ENCODE measurements at regions of chr10 and their contacts with region 1.

Region 1: DNA sequence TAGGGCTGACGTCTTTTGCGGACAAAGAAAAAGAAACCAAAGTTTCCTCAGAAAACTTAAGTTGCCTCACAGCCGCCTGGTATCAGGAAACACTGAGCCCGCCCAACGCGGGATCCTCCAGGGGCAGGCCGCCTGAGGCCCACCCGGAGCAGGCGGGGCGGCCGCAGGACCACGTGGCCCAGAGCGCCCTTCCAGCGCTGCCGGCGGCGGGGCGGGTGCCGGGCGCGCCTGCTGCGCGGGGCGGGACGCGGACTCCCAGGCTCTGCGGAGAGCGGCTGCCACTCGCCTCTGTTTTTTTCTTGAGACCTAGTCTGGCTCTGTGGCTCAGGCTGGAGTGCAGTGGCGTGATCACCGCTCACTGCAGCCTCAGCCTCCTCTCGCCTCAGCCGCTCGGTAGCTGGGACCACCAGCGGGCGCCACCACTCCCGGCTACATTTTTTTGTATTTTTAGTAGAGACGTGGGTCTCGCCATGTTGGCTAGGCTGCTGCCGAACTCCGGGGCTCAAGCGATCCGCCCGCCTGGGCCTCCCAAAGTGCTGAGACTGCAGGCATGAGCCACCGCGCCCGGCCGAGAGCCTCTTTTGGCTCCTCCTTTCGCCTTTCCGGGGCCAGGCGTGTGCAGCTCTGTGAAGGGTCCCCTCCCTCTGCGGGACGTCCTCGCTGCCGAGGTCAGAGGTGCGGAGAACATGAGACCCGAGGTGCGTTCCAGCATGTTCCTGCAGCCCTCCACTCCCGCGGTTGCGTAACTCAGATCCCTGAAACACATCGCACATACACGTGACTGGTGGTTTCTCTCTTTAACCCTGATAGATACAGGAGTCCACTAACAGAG is 11.6 kb upstream of the HNRNPF start:
- DNase-seq: peak; percentile 73 to 88 (median 84)
- ATAC-seq: peak; percentile 87 to 91
- H3K4me3 Mint-ChIP-seq: peak overlapping the region; percentile 88 to 94 (median 92)
- H3K27ac Mint-ChIP-seq: peak overlapping the region; percentile 96 to 98 (median 97)
- H3K4me1 Mint-ChIP-seq: peaks cover 14 to 45% (median 35%) of the 10 kb centered on the region in 4 donors
- H3K27me3 Mint-ChIP-seq: no peaks in the 10 kb centered on the region

Region 2: DNA sequence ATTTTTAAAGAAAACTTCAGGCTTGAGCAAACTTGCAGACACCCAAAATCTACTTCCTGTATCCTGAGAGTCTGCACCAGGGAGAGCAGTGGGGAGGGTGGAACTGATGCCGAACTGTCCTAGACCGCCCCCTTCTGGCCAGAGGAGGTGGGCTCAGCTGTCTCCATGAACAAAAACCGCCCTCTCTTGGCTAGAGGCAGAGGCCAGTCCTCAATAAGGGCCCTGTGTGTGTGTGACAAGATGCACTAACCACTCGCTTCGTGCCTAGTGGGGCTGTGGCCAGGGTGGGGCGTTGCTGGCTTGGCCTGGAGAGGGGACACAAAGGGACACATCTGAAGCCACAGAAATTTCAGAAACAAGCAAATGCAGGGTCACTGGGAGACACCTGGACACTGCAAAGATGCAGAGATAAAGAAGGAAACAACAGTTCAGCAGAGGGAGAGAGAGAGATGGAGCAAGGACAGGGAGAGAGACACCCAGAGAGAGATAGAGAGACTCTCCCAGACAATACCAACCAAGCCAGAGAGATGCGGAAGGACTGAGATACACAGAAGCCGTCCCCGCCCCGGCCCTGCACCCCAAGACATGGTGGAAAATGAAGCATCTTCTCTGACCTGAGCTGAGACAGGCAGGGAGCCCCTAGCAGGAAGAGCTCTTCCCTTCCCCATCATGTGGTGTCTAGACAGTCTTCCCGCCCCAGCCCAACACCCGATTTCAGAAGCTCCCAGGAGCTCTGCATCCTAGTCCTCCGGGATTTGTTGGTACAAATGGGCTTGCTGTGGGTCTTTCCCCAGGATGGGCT is 71.9 kb before region 1 on chr10:
- POLR2A ChIA-PET with region 1: no interaction called
- DNase-seq: peak; percentile 70 to 92 (median 82)
- ATAC-seq: peak; percentile 100
- H3K4me3 Mint-ChIP-seq: peak overlapping the region in 4 of 10 donors; percentile 4 to 34 (median 20)
- H3K27ac Mint-ChIP-seq: peak overlapping the region in 7 of 10 donors; percentile 33 to 84 (median 58)
- H3K4me1 Mint-ChIP-seq: peaks cover 12 to 19% (median 16%) of the 10 kb centered on the region in 4 donors
- H3K27me3 Mint-ChIP-seq: peaks cover 0 to 26% (median 14%) of the 10 kb centered on the region in 5 donors

Region 3: DNA sequence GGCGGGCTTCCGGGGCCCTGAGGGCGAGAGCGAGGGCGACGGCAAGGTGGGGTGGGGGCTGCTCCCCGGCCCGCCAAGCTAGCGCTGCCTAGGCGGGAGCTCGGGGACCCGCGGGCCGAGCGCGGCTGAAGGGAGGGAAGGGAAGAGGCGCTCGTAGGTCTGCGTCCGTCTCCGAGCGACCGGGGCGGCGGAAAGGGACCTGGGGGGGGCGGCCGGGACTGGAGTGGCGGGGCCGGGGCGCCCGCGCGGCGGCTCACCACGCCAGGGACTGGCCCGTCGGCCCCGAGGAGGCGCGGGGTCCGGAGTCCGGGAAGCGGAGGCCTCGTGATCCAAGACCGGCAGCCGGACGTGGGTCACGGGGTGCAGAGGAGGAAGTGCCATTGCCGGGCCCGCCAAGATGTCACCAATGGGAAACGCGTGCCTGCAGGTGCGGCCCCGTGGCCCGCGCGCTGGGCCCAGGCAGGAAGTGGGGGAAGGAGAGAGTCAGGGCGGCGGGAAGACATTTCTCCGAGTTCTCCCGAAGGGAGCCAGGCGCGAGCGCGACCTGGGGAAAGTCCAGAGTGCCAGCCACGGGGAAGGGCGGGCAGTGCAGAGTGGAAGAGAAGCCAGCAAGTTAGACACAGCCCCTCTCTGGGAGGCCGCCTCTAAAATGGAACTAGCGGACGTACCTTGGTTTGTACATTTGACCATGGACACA is 23.5 kb before region 1 on chr10:
- POLR2A ChIA-PET with region 1: interaction called, 10 read pairs
- DNase-seq: peak; percentile 53 to 80 (median 70)
- ATAC-seq: peak; percentile 73 to 75
- H3K4me3 Mint-ChIP-seq: peak overlapping the region; percentile 85 to 97 (median 94)
- H3K27ac Mint-ChIP-seq: peak overlapping the region; percentile 93 to 99 (median 97)
- H3K4me1 Mint-ChIP-seq: peaks cover 32 to 87% (median 83%) of the 10 kb centered on the region in 4 donors
- H3K27me3 Mint-ChIP-seq: no peaks in the 10 kb centered on the region

Region 4: DNA sequence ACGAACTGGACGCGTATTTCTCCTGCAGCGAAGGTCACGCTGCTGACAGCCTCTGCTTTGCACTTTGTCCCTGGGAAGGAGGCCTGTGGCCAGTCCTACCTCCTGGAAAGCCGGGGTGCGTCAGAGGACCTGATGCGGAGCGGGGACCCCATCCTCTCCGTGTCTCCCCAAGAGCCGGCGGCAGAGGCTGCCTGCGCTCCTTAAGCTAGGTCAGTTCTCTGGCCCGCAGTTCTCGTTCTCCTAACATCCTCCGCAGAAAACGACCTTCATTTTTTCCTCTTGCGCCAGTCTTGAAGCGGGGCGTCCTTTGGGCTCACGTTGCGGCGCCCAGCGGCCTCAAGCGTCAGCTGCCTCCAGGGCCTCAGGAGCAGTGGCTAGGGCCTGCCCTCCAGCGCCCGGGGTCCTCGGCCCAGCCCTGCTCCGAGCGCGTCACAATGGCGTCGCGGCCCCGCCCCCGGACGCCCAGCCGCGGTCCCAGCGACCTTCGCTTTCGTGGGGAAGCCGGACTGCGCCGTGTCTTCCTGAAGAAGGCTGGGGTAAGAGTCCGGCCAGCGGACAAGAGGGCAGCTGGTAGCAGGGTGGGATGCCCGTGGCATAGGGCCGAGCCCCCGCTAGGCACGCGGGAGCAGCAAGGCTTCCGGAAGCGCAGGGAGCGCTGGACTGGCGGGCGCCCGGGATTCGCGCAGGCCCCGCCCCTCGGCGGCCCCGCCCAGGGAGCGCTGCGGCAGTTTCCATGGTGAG is 16.0 kb after region 1 on chr10 and contains the start of gene ZNF487:
- POLR2A ChIA-PET with region 1: interaction called, 39 read pairs
- DNase-seq: peak; percentile 81 to 97 (median 92)
- ATAC-seq: peak; percentile 88 to 90
- H3K4me3 Mint-ChIP-seq: peak within 1 kb of the TSS; percentile 89 to 100 (median 96)
- H3K27ac Mint-ChIP-seq: peak within 1 kb of the TSS; percentile 94 to 100 (median 99)
- H3K4me1 Mint-ChIP-seq: peaks cover 4 to 31% (median 25%) of the 10 kb centered on the region in 4 donors
- H3K27me3 Mint-ChIP-seq: no peaks in the 10 kb centered on the region
- polyA plus RNA-seq, gene ZNF487: 4.0 to 6.0 (median 5.1) TPM

Region 5: GRCh38 chr10:43452356-43452914 is 31.9 kb after region 1 on chr10:
- POLR2A ChIA-PET with region 1: interaction called, 11 read pairs
- DNase-seq: no peak
- ATAC-seq: no peak
- H3K4me3 Mint-ChIP-seq: peak overlapping the region; percentile 59 to 84 (median 78)
- H3K27ac Mint-ChIP-seq: peak overlapping the region; percentile 85 to 99 (median 97)
- H3K4me1 Mint-ChIP-seq: peaks cover 25 to 53% (median 48%) of the 10 kb centered on the region in 4 donors
- H3K27me3 Mint-ChIP-seq: no peaks in the 10 kb centered on the region

Region 6: DNA sequence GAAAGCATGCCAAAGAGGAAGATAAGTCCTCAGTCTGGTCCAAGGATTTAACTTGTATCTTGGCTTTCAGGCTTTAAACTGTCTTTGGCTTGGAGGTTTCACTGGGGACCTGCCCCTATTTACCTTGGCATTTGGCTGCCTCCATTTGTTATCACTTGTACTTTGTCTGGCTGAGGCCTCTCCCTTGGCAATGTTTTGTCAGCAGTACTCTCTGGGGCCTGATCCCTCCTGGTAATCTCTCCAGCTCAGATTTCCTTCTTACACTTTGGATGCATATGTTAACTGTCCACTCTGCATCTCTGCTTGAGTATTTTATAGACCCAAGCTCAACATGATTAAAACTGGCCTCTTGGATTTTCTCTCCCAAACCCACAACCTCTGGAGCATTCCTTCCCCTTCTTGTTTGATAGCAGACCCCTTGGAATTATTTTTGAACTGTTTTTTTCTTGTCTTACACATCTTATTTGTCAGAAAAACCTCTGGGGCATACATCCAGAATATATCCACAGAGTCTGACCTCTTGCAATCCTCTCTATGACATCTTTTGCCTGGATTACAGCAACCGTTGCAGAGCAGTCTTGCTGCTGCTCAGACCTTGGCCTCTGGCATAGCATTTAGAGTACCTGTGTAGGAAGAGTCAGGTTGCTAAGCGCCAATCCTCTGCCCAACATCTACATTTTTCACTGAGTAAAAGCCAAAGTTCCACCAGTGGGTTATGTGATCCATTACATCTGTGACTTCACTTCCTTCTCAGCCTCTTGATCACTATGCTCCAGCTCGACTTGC is 51.5 kb after region 1 on chr10:
- POLR2A ChIA-PET with region 1: no interaction called
- DNase-seq: no peak
- ATAC-seq: no peak
- H3K4me3 Mint-ChIP-seq: no peak overlapping the region
- H3K27ac Mint-ChIP-seq: peak overlapping the region in 1 of 10 donors; percentile 39
- H3K4me1 Mint-ChIP-seq: peaks cover 0 to 5% (median 0%) of the 10 kb centered on the region in 4 donors
- H3K27me3 Mint-ChIP-seq: no peaks in the 10 kb centered on the region

Measured in naive thymus-derived CD8-positive, alpha-beta T cell (primary cell).